ENCODE measurements at regions of chr13 and their contacts with region 1.

Region 1: GRCh38 chr13:64723724-64724123 is 2506.4 kb downstream of the PCDH9 start:
- DNase-seq: peak; percentile 93
- ATAC-seq: peak; percentile 100
- H3K4me3 ChIP-seq: no peak overlapping the region
- H3K27ac ChIP-seq: peak overlapping the region; percentile 22; the same call in 1 of the 2 replicates
- H3K4me1 ChIP-seq: peaks cover 13% of the 10 kb centered on the region
- H3K27me3 ChIP-seq: no peaks in the 10 kb centered on the region
- CTCF ChIP-seq: no peak

Region 2: GRCh38 chr13:64538711-64539110 is 185.0 kb before region 1 on chr13:
- CTCF ChIA-PET with region 1: no interaction called
- POLR2A ChIA-PET with region 1: no interaction called
- intact Hi-C with region 1: loop called (anchors 1 kb)
- DNase-seq: peak; percentile 6
- ATAC-seq: peak; percentile 40; the same call in 1 of the 2 replicates
- H3K4me3 ChIP-seq: no peak overlapping the region
- H3K27ac ChIP-seq: no peak overlapping the region
- H3K4me1 ChIP-seq: 0 out of 2 replicates have a peak, but pooled peaks cover 4% of the 10 kb centered on the region
- H3K27me3 ChIP-seq: no peaks in the 10 kb centered on the region
- CTCF ChIP-seq: no peak

Region 3: DNA sequence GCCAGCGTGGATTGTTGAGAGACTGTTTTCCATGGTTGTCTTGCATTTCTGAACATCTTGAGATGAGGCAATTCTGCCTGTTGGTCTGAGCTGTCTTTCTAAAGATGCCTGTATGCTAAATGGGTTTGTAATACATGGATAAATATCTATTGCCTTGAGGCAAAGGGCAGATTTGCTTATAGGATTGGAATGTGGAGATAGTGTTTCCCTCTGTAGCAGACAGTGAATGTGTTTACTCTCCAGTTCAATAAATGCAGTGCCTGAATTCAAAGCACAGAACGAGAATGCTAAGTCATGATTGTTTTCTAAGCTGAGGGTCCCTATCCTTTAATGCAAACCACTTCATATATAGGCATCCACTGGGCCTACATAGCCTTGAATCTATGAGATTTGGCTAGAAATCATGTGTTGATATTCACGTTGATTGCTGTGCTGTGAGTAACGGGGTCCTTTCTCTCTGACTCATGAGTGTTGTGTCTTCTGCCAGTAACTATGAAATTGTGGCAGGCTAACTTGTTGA is 48.4 kb before region 1 on chr13:
- CTCF ChIA-PET with region 1: no interaction called
- POLR2A ChIA-PET with region 1: no interaction called
- intact Hi-C with region 1: no loop called
- DNase-seq: peak; percentile 76
- ATAC-seq: peak; percentile 90
- H3K4me3 ChIP-seq: peak overlapping the region; percentile 46; the same call in 1 of the 2 replicates
- H3K27ac ChIP-seq: peak overlapping the region; percentile 38
- H3K4me1 ChIP-seq: peaks cover 22% of the 10 kb centered on the region
- H3K27me3 ChIP-seq: no peaks in the 10 kb centered on the region
- CTCF ChIP-seq: no peak

Region 4: DNA sequence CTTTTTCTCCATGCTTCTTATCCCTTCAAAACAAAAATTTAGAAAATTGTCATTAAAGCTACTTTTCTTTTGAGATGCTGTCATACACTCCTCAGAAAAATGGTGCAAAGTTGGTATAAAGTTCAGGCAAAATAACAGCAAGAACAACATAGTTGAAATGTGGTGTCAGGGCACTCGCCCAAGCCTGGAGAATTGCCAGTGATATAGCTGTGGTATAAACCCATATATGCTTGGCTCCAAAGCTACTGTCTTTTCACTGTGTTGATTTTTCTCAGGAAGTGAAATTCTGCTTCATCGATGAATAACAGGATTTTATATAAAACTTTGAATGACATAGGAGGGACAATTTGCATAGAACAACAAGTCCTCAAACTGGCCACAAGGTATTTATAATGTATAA is 26.5 kb before region 1 on chr13:
- CTCF ChIA-PET with region 1: no interaction called
- POLR2A ChIA-PET with region 1: no interaction called
- intact Hi-C with region 1: no loop called
- DNase-seq: peak; percentile 61
- ATAC-seq: peak; percentile 50
- H3K4me3 ChIP-seq: no peak overlapping the region
- H3K27ac ChIP-seq: no peak overlapping the region
- H3K4me1 ChIP-seq: peaks cover 4% of the 10 kb centered on the region; the same call in 1 of the 2 replicates
- H3K27me3 ChIP-seq: no peaks in the 10 kb centered on the region
- CTCF ChIP-seq: no peak

Measured in PC-3 (cell line).